Right ventricle myocardium inferior (tissue), 1 donor: ENCODE measurements at regions of chr6 and their contacts with region 1.

Region 1: GRCh38 chr6:45930420-45931040 is 85.1 kb downstream of the CLIC5 start:
- DNase-seq: peak; percentile 80
- ATAC-seq: peak; percentile 71

Region 2: GRCh38 chr6:46059608-46060007 is 129.1 kb after region 1 on chr6:
- intact Hi-C with region 1: loop called (anchors 1 kb)
- DNase-seq: no peak
- ATAC-seq: peak; percentile 54

Region 3: DNA sequence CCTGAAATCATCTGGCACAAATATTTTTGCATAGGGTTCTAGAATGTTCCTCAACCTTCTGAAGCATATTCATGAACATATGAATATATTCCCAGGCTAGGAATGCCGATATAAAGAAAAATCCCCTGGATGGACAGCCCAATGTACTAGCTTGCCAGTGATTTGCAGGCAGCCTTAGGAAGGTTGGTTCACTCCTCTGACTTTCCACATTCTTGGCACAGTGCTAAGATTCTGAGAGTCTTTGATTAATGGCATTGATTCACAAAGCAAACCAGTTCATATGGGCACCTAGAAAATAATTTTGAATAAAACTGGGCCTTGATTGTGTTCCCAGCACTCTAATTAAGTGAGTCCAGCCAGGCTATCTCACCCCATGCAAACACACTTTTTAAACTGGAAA is 142.3 kb after region 1 on chr6:
- intact Hi-C with region 1: no loop called
- DNase-seq: no peak
- ATAC-seq: no peak